ENCODE measurements at regions of chr3 and their contacts with region 1.

Region 1: GRCh38 chr3:180679178-180680096 is at the start of gene CCDC39:
- DNase-seq: peak; percentile 83
- H3K4me3 ChIP-seq: peak within 1 kb of the TSS; percentile 45 to 69 (median 62)
- H3K27ac ChIP-seq: peak within 1 kb of the TSS; percentile 50
- H3K4me1 ChIP-seq: peaks cover 7% of the 10 kb centered on the region
- H3K27me3 ChIP-seq: no peaks in the 10 kb centered on the region
- CTCF ChIP-seq: no peak
- total RNA-seq, gene CCDC39: 0.26 TPM in 1 of 2 donors, not detected in the other

Region 2: GRCh38 chr3:180131169-180131568 is 548.3 kb before region 1 on chr3:
- CTCF ChIA-PET with region 1: no interaction called
- dilution Hi-C with region 1: no loop called
- in situ Hi-C with region 1: no loop called
- intact Hi-C with region 1: no loop called
- DNase-seq: no peak
- H3K4me3 ChIP-seq: no peak overlapping the region
- H3K27ac ChIP-seq: no peak overlapping the region
- H3K4me1 ChIP-seq: no peaks in the 10 kb centered on the region
- H3K27me3 ChIP-seq: no peaks in the 10 kb centered on the region
- CTCF ChIP-seq: no peak

Region 3: GRCh38 chr3:180601688-180602666 is 77.5 kb before region 1 on chr3 and contains the start of gene TTC14:
- CTCF ChIA-PET with region 1: no interaction called
- dilution Hi-C with region 1: no loop called
- in situ Hi-C with region 1: no loop called
- intact Hi-C with region 1: loop called (anchors 1 kb)
- DNase-seq: peak; percentile 95
- H3K4me3 ChIP-seq: peak within 1 kb of the TSS; percentile 93 to 99 (median 96)
- H3K27ac ChIP-seq: peak within 1 kb of the TSS; percentile 52
- H3K4me1 ChIP-seq: peaks cover 7% of the 10 kb centered on the region
- H3K27me3 ChIP-seq: no peaks in the 10 kb centered on the region
- CTCF ChIP-seq: no peak
- total RNA-seq, gene TTC14: 31.0 to 37.0 TPM

Region 4: DNA sequence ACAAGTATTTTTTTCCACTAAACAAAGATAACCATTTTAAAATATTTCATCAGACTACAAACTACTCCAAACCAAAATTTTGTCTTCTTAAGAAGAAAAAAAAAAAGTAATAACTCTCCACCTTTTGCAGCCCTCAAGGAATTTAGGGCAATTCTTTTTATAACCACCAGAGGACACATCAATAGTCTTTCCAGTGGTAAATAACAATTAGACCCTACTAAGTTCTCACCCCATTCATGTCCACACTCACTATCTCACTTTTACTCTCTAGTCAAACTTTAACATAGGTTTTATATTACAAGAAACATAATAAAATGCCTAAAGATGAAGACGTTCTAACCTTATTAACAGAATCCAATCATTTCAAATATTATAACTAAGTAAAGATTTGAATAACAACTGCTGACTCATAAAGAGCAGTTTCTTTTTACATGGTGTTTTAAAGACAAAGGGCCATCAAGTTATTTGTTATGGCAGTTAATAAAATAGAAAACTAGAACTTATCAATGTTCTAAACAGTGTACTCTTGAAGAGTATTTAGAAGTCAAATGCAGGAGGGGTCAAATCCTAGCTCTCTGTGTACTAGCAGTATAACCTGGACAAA is 33.1 kb before region 1 on chr3:
- CTCF ChIA-PET with region 1: no interaction called
- dilution Hi-C with region 1: no loop called
- in situ Hi-C with region 1: no loop called
- intact Hi-C with region 1: loop called (anchors 2 kb)
- DNase-seq: no peak
- H3K4me3 ChIP-seq: no peak overlapping the region
- H3K27ac ChIP-seq: no peak overlapping the region
- H3K4me1 ChIP-seq: no peaks in the 10 kb centered on the region
- H3K27me3 ChIP-seq: peaks cover 6% of the 10 kb centered on the region
- CTCF ChIP-seq: peak; percentile 38 to 42

Region 5: DNA sequence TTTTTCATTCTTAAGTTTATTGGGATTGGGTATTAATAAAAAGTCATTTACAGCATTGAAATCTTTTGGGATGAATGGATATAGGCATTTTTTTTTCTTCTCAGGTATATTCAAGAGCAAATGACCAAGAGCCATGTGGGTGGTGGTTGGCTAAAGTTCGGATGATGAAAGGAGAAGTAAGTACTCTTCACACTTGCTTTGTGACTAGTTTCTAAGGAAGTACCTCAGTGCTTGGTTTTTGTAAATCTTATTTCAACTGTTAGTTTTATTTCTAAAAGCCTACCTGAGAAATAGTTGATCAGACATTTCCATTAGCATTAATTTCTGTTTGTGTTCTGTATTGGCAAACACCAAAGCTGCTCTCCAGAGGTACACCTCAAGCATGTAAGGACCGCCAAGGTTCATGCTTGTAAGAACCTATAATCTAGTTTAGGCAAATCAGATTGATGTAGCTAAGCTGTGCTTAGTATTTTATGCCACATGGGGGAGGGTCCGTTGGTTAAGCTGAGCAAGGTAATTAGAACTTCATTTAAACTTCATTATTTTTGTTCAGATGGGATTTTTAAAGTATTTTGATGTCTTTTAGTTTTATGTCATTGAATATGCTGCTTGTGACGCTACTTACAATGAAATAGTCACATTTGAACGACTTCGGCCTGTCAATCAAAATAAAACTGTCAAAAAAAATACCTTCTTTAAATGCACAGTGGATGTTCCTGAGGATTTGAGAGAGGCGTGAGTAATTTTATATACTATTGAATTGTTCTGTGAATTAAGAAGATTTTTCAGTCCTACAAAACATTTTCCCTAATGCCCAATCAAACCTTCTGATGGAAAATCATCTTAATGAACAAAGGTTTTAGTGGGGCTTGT is 268.6 kb after region 1 on chr3:
- CTCF ChIA-PET with region 1: no interaction called
- dilution Hi-C with region 1: no loop called
- in situ Hi-C with region 1: no loop called
- intact Hi-C with region 1: no loop called
- DNase-seq: no peak
- H3K4me3 ChIP-seq: no peak overlapping the region
- H3K27ac ChIP-seq: no peak overlapping the region
- H3K4me1 ChIP-seq: no peaks in the 10 kb centered on the region
- H3K27me3 ChIP-seq: no peaks in the 10 kb centered on the region
- CTCF ChIP-seq: no peak